PC-3 (cell line): ENCODE measurements at regions of chr18 and their contacts with region 1.

Region 1: GRCh38 chr18:62584241-62585120 is 61.7 kb downstream of the ZCCHC2 start:
- DNase-seq: peak; percentile 90
- ATAC-seq: peak; percentile 83
- H3K4me3 ChIP-seq: no peak overlapping the region
- H3K27ac ChIP-seq: no peak overlapping the region
- H3K4me1 ChIP-seq: peaks cover 4% of the 10 kb centered on the region
- H3K27me3 ChIP-seq: no peaks in the 10 kb centered on the region
- CTCF ChIP-seq: peak; percentile 97

Region 2: DNA sequence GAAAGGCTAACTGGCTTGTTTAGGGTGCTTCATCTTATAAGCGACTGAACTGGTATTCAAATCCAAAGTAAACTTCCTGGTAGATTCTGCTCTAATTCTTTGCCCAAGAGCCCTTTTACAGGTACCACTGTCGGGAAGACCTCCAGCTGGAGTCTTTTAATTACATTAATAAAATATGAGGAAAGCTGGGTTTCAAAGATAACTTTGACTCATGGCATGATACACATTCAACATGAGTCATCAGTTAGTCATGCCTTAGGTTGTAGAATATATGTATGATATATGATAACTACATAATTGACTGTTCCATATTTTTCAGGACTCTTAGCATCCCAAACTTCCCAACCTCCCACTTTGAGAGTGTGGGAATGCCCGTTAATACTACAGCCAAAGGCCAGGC is 29.3 kb before region 1 on chr18:
- CTCF ChIA-PET with region 1: no interaction called
- POLR2A ChIA-PET with region 1: no interaction called
- intact Hi-C with region 1: loop called (anchors 1 kb)
- DNase-seq: peak; percentile 96
- ATAC-seq: peak; percentile 95
- H3K4me3 ChIP-seq: peak overlapping the region; percentile 2; the same call in 1 of the 2 replicates
- H3K27ac ChIP-seq: peak overlapping the region; percentile 48
- H3K4me1 ChIP-seq: peaks cover 18% of the 10 kb centered on the region
- H3K27me3 ChIP-seq: no peaks in the 10 kb centered on the region
- CTCF ChIP-seq: no peak

Region 3: DNA sequence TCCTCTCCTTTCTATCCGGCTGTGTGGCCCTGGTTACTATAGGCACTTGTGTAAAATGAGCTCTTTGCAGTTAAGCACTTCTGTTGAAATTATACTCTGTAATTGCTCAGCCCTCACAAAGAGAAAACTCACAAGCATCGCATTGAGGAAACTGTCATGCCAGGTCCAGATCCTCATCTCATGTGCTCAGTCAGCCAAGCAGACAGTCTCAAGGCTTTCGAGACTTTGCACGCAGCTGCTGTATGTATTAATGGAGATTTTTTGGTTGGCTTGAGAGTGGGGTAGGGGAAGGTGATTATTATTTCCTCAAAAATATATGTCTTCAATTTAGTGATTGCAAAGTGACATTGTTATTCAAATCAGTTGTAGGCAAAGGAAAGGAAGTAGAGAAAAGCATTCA is 97.9 kb after region 1 on chr18:
- CTCF ChIA-PET with region 1: no interaction called
- POLR2A ChIA-PET with region 1: no interaction called
- intact Hi-C with region 1: no loop called
- DNase-seq: no peak
- ATAC-seq: no peak
- H3K4me3 ChIP-seq: no peak overlapping the region
- H3K27ac ChIP-seq: no peak overlapping the region
- H3K4me1 ChIP-seq: no peaks in the 10 kb centered on the region
- H3K27me3 ChIP-seq: no peaks in the 10 kb centered on the region
- CTCF ChIP-seq: no peak

Region 4: DNA sequence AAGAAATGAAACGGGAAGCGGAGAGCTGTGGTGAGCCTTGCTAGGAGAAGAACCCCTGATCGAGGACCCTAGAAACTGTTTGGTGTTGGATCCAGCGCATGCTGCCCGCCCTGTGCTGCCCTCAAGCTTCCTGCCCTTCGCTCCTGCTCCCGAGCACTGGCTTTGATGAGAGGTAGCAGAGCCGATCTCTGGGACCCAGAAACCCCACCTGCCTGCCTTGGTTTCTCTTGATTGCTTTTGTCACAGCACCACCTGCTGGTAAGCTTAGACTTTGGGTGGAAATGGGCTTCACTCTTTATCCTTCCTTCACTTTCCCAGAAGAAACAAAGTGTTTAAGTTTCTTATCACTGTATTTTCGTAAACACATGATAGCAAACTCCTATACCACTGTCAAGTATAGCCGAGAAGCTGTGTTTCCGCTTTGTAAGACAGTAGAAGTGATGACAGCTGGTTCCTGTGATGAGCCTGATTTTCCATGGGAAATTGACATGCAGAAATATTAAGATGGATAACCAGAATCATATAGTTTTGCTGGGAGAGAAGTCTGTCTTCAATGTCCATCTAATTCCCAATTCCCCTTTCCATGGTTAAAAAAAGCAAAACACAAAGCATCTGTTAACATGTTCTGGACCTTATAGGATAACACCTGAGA is 398.2 kb after region 1 on chr18:
- CTCF ChIA-PET with region 1: interaction called, 3 read pairs
- POLR2A ChIA-PET with region 1: no interaction called
- intact Hi-C with region 1: loop called (anchors 1 kb)
- DNase-seq: peak; percentile 62
- ATAC-seq: peak; percentile 59
- H3K4me3 ChIP-seq: no peak overlapping the region
- H3K27ac ChIP-seq: no peak overlapping the region
- H3K4me1 ChIP-seq: peaks cover 15% of the 10 kb centered on the region
- H3K27me3 ChIP-seq: no peaks in the 10 kb centered on the region
- CTCF ChIP-seq: peak; percentile 93